ENCODE measurements at regions of chr4 and their contacts with region 1.

Region 1: DNA sequence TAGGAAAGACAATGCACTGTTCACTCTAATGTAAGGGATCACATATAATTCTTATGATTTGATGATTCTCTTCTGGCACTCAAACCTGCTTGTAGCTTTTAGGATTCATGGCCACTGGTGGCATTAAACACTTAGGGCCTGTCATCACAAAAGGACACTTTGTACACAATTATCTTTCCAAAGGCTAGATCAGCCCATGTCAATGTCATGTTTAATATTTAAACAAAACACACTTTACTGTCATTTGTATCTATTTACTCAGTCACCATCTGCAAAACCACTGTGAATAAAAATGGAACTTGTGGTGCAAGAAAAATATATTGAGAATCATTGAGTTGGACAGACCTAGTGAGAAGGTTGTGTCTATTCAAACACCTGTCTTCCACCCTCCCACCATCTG is 83.6 kb upstream of the TTC29 start:
- DNase-seq: no peak

Region 2: DNA sequence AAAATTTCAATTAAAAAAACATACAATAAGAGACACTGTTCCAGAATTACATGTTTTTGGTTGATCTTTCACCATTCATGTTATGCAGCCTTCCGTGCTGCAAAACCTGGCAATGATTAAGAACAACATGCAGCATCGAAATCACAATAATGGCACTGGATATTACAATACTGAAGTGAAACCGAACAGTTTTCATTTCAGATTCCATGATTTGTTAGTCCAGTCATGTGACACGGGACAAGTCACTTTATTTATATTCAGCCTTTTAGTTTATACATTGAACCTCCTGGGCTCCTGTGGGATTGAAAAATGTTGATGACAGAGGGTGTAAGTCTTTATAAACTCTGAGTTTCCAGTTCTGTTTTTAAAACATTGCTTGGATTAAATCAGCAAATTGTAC is 58.9 kb after region 1 on chr4:
- intact Hi-C with region 1: loop called in 1 of 2 experiments (anchors 10 kb)
- DNase-seq: no peak

Measured in posterior vena cava (tissue), 2 donors.